ENCODE measurements at regions of chr1 and their contacts with region 1.

Region 1: GRCh38 chr1:109773146-109773899 is 9.6 kb upstream of the EPS8L3 start:
- DNase-seq: peak; percentile 85 to 88
- H3K4me3 ChIP-seq: no peak overlapping the region
- H3K27ac ChIP-seq: no peak overlapping the region
- H3K4me1 ChIP-seq: peaks cover 0 to 21% of the 10 kb centered on the region in 2 donors
- H3K27me3 ChIP-seq: no peaks in the 10 kb centered on the region
- CTCF ChIP-seq: peak; percentile 54 to 96 (median 94)
- POLR2A ChIP-seq: no peak

Region 2: DNA sequence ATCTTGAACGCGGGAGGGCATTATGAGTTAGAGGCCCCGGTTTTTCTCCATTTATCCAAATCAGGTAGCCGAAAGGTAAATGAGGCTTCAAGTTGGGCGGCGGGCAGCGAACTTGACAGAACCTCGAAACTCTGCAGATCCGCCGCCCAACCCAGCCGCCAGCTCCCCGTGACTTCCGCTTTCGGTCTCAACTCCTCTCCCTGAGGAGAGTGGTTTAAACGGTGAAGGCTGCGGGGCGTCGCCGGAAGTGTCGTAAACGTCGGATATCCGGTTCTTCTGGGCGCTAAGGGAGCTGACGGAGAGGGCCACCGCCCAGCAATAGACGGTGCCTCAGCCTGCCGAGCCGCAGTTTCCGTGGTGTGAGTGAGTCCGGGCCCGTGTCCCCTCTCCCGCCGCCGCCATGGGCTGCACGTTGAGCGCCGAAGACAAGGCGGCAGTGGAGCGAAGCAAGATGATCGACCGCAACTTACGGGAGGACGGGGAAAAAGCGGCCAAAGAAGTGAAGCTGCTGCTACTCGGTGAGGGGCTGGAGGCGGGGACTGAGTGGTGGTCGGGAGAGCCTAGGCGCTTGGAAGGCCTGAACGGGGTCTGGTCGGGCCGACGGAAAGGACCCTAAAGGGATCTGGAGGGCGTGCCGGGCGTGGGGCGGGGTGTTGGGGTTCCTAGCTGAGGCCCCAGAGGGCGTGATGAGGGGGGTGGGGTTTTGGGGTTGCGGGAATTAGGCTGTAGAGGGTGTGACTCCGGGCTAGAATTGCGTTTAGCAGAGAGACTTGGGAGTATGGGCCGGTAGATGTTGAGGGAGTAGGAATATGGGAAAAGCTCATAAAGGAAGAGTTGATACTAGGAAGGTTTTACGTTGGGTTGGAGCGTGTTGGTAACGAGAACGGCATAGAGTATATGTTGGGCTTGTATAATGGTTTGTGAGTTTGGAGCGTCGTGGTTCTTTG is 224.7 kb before region 1 on chr1 and contains the start of gene GNAI3:
- intact Hi-C with region 1: loop called (anchors 2 kb)
- DNase-seq: peak; percentile 96
- H3K4me3 ChIP-seq: peak within 1 kb of the TSS; percentile 67 to 98 (median 89)
- H3K27ac ChIP-seq: peak within 1 kb of the TSS; percentile 67 to 92 (median 92)
- H3K4me1 ChIP-seq: peaks cover 28 to 29% of the 10 kb centered on the region in 2 donors
- H3K27me3 ChIP-seq: no peaks in the 10 kb centered on the region
- CTCF ChIP-seq: no peak
- POLR2A ChIP-seq: peak; percentile 59 to 98
- total RNA-seq, gene GNAI3: 5.1 to 7.2 (median 6.0) TPM

Region 3: GRCh38 chr1:109640285-109640865 is 132.9 kb before region 1 on chr1:
- intact Hi-C with region 1: loop called (anchors 2 kb)
- DNase-seq: peak; percentile 83 to 89
- H3K4me3 ChIP-seq: no peak overlapping the region
- H3K27ac ChIP-seq: no peak overlapping the region
- H3K4me1 ChIP-seq: peaks cover 0 to 9% of the 10 kb centered on the region in 2 donors
- H3K27me3 ChIP-seq: no peaks in the 10 kb centered on the region
- CTCF ChIP-seq: peak; percentile 80 to 98 (median 85)
- POLR2A ChIP-seq: no peak

Region 4: DNA sequence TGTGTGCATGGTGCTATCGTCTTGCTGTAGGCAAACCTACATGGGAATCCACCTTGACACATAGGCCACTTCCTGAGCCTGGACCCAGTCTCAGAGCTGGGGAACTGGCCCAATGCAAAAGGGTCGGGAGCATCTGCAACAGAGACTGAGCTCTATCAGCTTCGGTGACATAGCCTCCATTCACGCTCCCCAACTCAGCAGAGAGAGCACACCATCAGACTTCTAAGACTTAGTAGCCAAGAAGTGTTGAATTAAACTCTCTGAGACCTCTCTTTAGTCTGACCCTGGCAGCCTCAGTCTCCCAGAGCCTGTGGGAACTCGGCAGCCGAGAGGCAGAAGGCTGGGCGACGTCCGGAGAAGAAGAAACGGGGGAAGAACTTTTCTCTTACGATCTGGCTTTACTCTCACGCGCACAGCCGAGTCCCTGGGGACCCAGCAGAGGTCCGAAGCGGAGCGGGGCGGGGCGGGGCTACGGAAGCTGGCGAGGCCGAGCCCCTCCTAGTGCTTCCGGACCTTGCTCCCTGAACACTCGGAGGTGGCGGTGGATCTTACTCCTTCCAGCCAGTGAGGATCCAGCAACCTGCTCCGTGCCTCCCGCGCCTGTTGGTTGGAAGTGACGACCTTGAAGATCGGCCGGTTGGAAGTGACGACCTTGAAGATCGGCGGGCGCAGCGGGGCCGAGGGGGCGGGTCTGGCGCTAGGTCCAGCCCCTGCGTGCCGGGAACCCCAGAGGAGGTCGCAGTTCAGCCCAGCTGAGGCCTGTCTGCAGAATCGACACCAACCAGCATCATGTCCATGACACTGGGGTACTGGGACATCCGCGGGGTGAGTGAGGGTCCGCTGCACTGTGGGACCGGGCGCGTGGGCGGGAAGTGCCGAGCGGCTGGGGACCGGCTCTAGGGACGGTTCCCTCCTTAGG is 117.5 kb before region 1 on chr1 and contains the start of gene GSTM4:
- intact Hi-C with region 1: no loop called
- DNase-seq: peak; percentile 93 to 95
- H3K4me3 ChIP-seq: peak within 1 kb of the TSS; percentile 31 to 65 (median 52)
- H3K27ac ChIP-seq: peak within 1 kb of the TSS; percentile 84 to 95 (median 86)
- H3K4me1 ChIP-seq: peaks cover 23 to 36% of the 10 kb centered on the region in 2 donors
- H3K27me3 ChIP-seq: no peaks in the 10 kb centered on the region
- CTCF ChIP-seq: peak in 1 of 6 experiments; percentile 7
- POLR2A ChIP-seq: peak in 1 of 2 donors; percentile 77
- total RNA-seq, gene GSTM4: 30.8 to 68.8 (median 43.7) TPM

Region 5: DNA sequence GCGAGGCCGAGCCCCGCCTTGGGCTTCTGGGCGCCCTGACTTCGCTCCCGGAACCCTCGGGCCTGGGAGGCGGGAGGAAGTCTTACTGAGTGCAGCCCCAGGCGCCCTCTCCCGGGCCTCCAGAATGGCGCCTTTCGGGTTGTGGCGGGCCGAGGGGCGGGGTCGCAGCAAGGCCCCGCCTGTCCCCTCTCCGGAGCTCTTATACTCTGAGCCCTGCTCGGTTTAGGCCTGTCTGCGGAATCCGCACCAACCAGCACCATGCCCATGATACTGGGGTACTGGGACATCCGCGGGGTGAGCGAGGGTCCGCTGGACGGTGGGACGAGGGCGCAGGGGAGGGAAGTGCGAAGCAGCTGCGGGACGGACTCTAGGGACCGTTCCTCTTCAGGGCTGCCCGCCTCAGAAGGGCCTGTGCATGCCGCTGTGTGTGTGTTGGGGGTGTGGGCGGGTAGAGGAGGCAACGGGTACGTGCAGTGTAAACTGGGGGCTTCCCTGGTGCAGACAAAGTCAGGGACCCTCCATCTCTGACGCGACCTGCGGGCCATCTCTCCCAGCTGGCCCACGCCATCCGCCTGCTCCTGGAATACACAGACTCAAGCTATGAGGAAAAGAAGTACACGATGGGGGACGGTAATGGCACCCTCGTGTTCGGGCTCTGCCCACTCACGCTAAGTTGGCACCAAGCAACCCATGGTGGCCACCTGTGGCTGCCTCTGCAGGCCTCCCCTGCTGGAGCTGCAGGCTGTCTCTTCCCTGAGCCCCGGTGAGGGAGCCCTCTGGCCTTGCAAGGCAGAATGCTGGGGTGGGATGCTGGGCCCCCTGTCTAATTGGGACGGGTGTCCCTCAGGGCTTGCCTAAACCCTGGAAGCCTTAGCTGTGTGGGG is 85.5 kb before region 1 on chr1 and contains the start of gene GSTM1:
- intact Hi-C with region 1: no loop called
- DNase-seq: no peak
- H3K4me3 ChIP-seq: peak within 1 kb of the TSS in 1 of 3 donors; percentile 26
- H3K27ac ChIP-seq: peak within 1 kb of the TSS in 1 of 3 donors; percentile 36
- H3K4me1 ChIP-seq: no peaks in the 10 kb centered on the region
- H3K27me3 ChIP-seq: no peaks in the 10 kb centered on the region
- CTCF ChIP-seq: peak in 1 of 6 experiments; percentile 28
- POLR2A ChIP-seq: no peak
- total RNA-seq, gene GSTM1: 23.4 TPM in 1 of 4 donors, not detected in the others

Region 6: GRCh38 chr1:109910123-109910962 is 137.0 kb after region 1 on chr1 and contains the start of gene CSF1:
- intact Hi-C with region 1: loop called (anchors 5 kb)
- DNase-seq: peak; percentile 79
- H3K4me3 ChIP-seq: peak within 1 kb of the TSS; percentile 35 to 52 (median 47)
- H3K27ac ChIP-seq: peak within 1 kb of the TSS; percentile 55 to 73 (median 63)
- H3K4me1 ChIP-seq: peaks cover 6 to 43% of the 10 kb centered on the region in 2 donors
- H3K27me3 ChIP-seq: no peaks in the 10 kb centered on the region
- CTCF ChIP-seq: no peak
- POLR2A ChIP-seq: peak in 1 of 2 donors; percentile 50
- total RNA-seq, gene CSF1: 33.5 to 127 (median 62.3) TPM

Region 7: DNA sequence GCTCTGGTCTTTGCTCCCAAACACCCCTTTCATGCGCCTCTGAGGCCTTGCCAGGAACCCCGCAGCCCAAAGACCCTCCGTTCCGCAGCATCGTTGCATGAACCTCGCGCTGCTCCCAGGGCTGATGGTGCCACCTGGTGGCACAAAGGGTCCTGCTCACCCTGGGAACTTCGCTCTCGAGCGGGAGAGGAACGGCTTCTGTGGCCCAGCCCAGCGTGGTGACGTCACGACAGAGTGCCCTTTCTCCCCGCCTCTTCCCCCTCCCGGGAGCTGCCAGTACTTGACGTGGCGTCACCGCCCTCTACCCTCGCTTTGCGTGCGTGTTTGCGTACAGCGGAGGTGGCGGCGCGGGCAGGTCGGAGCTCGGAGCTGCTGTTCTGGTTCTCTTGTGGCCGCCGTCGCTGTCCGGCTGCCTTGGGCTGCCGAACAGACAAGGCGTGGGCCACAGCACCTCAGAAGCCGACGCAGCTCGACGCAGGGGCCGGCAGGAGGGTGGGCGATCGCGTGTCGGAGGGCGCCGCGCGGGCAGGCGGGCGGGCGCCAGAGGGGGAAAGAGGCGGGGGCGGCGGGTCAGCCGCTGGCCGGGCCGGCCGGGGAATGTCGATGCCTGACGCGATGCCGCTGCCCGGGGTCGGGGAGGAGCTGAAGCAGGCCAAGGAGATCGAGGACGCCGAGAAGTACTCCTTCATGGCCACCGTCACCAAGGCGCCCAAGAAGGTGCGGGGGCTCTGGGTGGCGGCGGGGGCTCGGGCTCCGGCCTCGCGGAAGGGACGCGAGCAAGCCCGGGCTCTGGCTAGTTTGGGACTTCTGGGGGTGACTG is 211.3 kb after region 1 on chr1 and contains the start of gene AHCYL1:
- intact Hi-C with region 1: loop called (anchors 1 kb)
- DNase-seq: peak; percentile 100
- H3K4me3 ChIP-seq: peak within 1 kb of the TSS; percentile 42 to 77 (median 68)
- H3K27ac ChIP-seq: peak within 1 kb of the TSS; percentile 93 to 98 (median 97)
- H3K4me1 ChIP-seq: peaks cover 25 to 39% of the 10 kb centered on the region in 2 donors
- H3K27me3 ChIP-seq: no peaks in the 10 kb centered on the region
- CTCF ChIP-seq: peak; percentile 91 to 99 (median 97)
- POLR2A ChIP-seq: peak; percentile 90 to 99
- total RNA-seq, gene AHCYL1: 90.3 to 200 (median 118) TPM

Region 8: GRCh38 chr1:110106013-110106941 is 333.0 kb after region 1 on chr1:
- intact Hi-C with region 1: no loop called
- DNase-seq: peak; percentile 58 to 61
- H3K4me3 ChIP-seq: no peak overlapping the region
- H3K27ac ChIP-seq: no peak overlapping the region
- H3K4me1 ChIP-seq: no peaks in the 10 kb centered on the region
- H3K27me3 ChIP-seq: no peaks in the 10 kb centered on the region
- CTCF ChIP-seq: peak; percentile 65 to 95 (median 74)
- POLR2A ChIP-seq: no peak

Region 9: GRCh38 chr1:110235834-110236682 is 462.7 kb after region 1 on chr1:
- intact Hi-C with region 1: no loop called
- DNase-seq: no peak
- H3K4me3 ChIP-seq: no peak overlapping the region
- H3K27ac ChIP-seq: no peak overlapping the region
- H3K4me1 ChIP-seq: no peaks in the 10 kb centered on the region
- H3K27me3 ChIP-seq: no peaks in the 10 kb centered on the region
- CTCF ChIP-seq: no peak
- POLR2A ChIP-seq: no peak